ENCODE measurements at regions of chr11 and their contacts with region 1.

Region 1: GRCh38 chr11:108647701-108648527 is 17.0 kb upstream of the DDX10 start:
- DNase-seq: peak; percentile 32 to 81 (median 46)
- ATAC-seq: peak; percentile 99
- H3K4me3 ChIP-seq: no peak overlapping the region
- H3K27ac ChIP-seq: no peak overlapping the region
- H3K4me1 ChIP-seq: peaks cover 0 to 2% of the 10 kb centered on the region in 2 experiments; a peak in 2 of 5 replicates
- H3K27me3 ChIP-seq: no peaks in the 10 kb centered on the region
- CTCF ChIP-seq: peak; percentile 83 to 93 (median 88)
- EP300 ChIP-seq: no peak
- POLR2A ChIP-seq: no peak
- RAD21 ChIP-seq: peak; percentile 97 to 99

Region 2: GRCh38 chr11:108008656-108009496 is 639.0 kb before region 1 on chr11 and contains the start of gene CUL5:
- CTCF ChIA-PET with region 1: interaction called, 3 read pairs
- POLR2A ChIA-PET with region 1: no interaction called
- in situ Hi-C with region 1: loop called (anchors 10 kb)
- intact Hi-C with region 1: loop called (anchors 5 kb)
- DNase-seq: peak; percentile 89 to 95 (median 91)
- ATAC-seq: peak; percentile 83
- H3K4me3 ChIP-seq: peak within 1 kb of the TSS; percentile 90
- H3K27ac ChIP-seq: peak within 1 kb of the TSS; percentile 99
- H3K4me1 ChIP-seq: peaks cover 12 to 20% of the 10 kb centered on the region in 2 experiments; a peak in 3 of 5 replicates
- H3K27me3 ChIP-seq: no peaks in the 10 kb centered on the region
- CTCF ChIP-seq: peak; percentile 87 to 88 (median 88)
- EP300 ChIP-seq: 0 out of 2 replicates have a peak, but pooled peaks have one; percentile 11
- POLR2A ChIP-seq: peak; percentile 94
- RAD21 ChIP-seq: peak; percentile 62 to 80
- polyA plus RNA-seq, gene CUL5: 14.3 to 16.3 TPM

Region 3: GRCh38 chr11:108121274-108122155 is 526.4 kb before region 1 on chr11 and contains the start of gene ACAT1:
- CTCF ChIA-PET with region 1: interaction called, 8 read pairs
- POLR2A ChIA-PET with region 1: interaction called, 4 read pairs
- in situ Hi-C with region 1: loop called (anchors 5 kb)
- intact Hi-C with region 1: loop called (anchors 1 kb)
- DNase-seq: peak; percentile 94 to 98 (median 96)
- ATAC-seq: peak; percentile 96
- H3K4me3 ChIP-seq: peak within 1 kb of the TSS; percentile 58
- H3K27ac ChIP-seq: peak within 1 kb of the TSS; percentile 74
- H3K4me1 ChIP-seq: peaks cover 29 to 30% of the 10 kb centered on the region in 2 experiments; a peak in 4 of 5 replicates
- H3K27me3 ChIP-seq: no peaks in the 10 kb centered on the region
- CTCF ChIP-seq: peak; percentile 29 to 34 (median 29); a peak in 3 of 6 replicates
- EP300 ChIP-seq: no peak; the same call in 1 of the 2 replicates
- POLR2A ChIP-seq: peak; percentile 91
- RAD21 ChIP-seq: no peak
- polyA plus RNA-seq, gene ACAT1: 74.0 to 100 TPM

Region 4: DNA sequence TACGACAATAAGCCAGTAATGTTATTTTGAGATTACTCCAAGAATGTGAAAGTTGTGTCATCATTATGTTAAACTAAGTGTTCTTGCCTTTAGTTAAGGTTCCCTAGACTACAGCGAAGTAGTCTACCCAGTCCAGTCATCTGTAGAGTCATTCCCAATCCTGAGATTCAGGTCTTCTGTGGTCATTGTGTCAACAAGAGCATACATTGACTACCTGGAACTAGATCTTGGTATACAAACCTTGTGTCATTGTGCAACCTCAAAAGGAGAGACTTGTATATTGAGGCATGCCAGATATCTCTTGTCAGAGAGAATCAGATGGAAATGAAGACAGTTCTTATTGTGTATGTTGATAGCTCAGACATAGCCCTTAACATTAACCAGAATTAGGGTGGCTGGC is 309.1 kb before region 1 on chr11:
- CTCF ChIA-PET with region 1: no interaction called
- POLR2A ChIA-PET with region 1: no interaction called
- in situ Hi-C with region 1: no loop called
- intact Hi-C with region 1: loop called (anchors 10 kb)
- DNase-seq: no peak
- ATAC-seq: no peak
- H3K4me3 ChIP-seq: no peak overlapping the region
- H3K27ac ChIP-seq: no peak overlapping the region
- H3K4me1 ChIP-seq: peaks cover 0 to 3% of the 10 kb centered on the region in 2 experiments; a peak in 3 of 5 replicates
- H3K27me3 ChIP-seq: no peaks in the 10 kb centered on the region
- CTCF ChIP-seq: no peak
- EP300 ChIP-seq: no peak
- POLR2A ChIP-seq: no peak
- RAD21 ChIP-seq: no peak

Region 5: DNA sequence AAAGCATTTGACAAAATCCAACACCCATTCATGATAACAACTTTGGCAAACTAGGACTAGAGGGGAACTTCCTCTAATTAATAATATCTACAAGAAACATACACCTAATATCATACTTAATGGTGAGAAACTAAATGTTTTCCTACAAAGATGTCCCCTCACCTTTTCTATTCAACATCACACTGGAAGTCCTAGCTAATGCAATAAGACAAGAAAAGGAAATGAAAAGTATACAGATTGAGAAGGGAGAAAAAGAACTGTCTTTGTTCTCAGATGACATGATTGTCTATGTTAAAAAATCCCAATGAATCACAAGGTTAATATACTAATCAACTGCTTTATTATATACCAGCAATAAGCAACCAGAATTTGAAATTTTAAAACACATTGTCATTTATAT is 233.0 kb before region 1 on chr11:
- CTCF ChIA-PET with region 1: interaction called, 3 read pairs
- POLR2A ChIA-PET with region 1: no interaction called
- in situ Hi-C with region 1: loop called (anchors 10 kb)
- intact Hi-C with region 1: loop called (anchors 1 kb)
- DNase-seq: no peak
- ATAC-seq: no peak
- H3K4me3 ChIP-seq: no peak overlapping the region
- H3K27ac ChIP-seq: no peak overlapping the region
- H3K4me1 ChIP-seq: no peaks in the 10 kb centered on the region
- H3K27me3 ChIP-seq: no peaks in the 10 kb centered on the region
- CTCF ChIP-seq: no peak
- EP300 ChIP-seq: no peak
- POLR2A ChIP-seq: no peak
- RAD21 ChIP-seq: no peak

Region 6: DNA sequence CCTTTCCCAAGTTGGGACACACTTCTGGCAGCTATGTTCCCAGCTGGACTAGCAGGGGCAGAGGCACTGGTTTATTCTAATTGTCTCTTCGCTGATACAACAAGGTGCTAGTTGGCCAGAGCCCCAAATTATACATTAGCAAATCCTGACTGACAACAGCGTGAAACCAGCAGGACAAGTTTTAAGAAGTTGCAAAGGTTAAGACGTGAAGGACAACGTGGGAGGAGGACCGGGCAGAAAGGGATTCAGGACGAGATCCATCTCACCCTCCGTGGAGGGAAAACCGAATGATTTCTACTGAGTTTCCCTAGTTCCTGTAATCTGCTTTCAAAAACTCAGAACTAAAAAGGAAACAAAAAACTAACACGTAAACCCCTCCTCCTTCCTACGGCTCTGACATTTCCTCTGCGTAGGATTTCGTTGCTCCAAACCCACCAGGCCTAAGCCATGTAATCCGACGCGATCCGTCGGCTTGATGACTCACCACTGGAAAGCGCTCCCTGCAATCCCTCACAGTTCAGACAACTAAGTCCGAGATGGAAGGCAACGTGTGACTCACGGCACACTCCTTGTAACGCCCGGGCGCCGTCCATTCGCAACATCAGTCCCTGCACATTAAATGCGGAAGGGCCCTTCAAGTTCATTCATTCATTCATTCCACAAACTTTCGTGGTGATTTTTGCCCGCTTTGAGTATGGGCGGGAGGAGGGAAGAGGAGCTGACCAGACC is 150.4 kb before region 1 on chr11:
- CTCF ChIA-PET with region 1: no interaction called
- POLR2A ChIA-PET with region 1: interaction called, 6 read pairs
- in situ Hi-C with region 1: no loop called
- intact Hi-C with region 1: loop called (anchors 5 kb)
- DNase-seq: peak; percentile 73 to 97 (median 81)
- ATAC-seq: peak; percentile 88
- H3K4me3 ChIP-seq: peak overlapping the region; percentile 59
- H3K27ac ChIP-seq: peak overlapping the region; percentile 97
- H3K4me1 ChIP-seq: peaks cover 17 to 37% of the 10 kb centered on the region in 2 experiments
- H3K27me3 ChIP-seq: no peaks in the 10 kb centered on the region
- CTCF ChIP-seq: no peak
- EP300 ChIP-seq: peak; percentile 59; the same call in 1 of the 2 replicates
- POLR2A ChIP-seq: peak; percentile 95
- RAD21 ChIP-seq: no peak

Region 7: DNA sequence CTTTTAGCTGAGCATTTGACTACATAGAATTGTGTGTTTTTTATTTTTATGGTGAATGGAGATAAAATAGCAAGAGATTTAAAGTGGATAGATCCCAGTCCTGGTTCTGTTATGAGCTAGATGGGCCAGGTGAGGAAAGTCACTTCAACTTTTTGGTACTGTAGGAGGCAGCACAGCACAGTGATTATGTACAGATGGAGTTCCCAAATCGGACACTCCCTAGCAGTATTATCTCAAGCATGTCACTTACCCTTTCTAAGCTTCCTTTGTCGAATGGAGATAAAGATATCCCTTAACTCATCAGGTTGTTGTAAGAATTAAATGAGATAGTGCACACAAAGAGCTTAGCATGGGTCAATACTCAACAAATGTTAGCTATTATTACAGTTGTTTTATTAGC is 59.6 kb before region 1 on chr11:
- CTCF ChIA-PET with region 1: interaction called, 9 read pairs
- POLR2A ChIA-PET with region 1: no interaction called
- in situ Hi-C with region 1: no loop called
- intact Hi-C with region 1: loop called (anchors 1 kb)
- DNase-seq: peak in 2 of 4 experiments; percentile 30 to 56
- ATAC-seq: peak; percentile 58
- H3K4me3 ChIP-seq: no peak overlapping the region
- H3K27ac ChIP-seq: no peak overlapping the region
- H3K4me1 ChIP-seq: peaks cover 10 to 20% of the 10 kb centered on the region in 2 experiments; a peak in 4 of 5 replicates
- H3K27me3 ChIP-seq: no peaks in the 10 kb centered on the region
- CTCF ChIP-seq: peak; percentile 30 to 48 (median 34); a peak in 5 of 6 replicates
- EP300 ChIP-seq: no peak
- POLR2A ChIP-seq: no peak
- RAD21 ChIP-seq: peak; percentile 48 to 63

Measured in K562 (cell line).